B cell (primary cell): ENCODE measurements at regions of chr19 and their contacts with region 1.

Region 1: GRCh38 chr19:58408152-58409009 is at the start of gene ZNF584:
- DNase-seq: peak; percentile 96
- ATAC-seq: peak; percentile 96
- H3K4me3 ChIP-seq: peak within 1 kb of the TSS; percentile 58 to 93 (median 83)
- H3K4me3 Mint-ChIP-seq: peak within 1 kb of the TSS; percentile 97
- H3K27ac ChIP-seq: peak within 1 kb of the TSS; percentile 82 to 93
- H3K27ac Mint-ChIP-seq: peak within 1 kb of the TSS; percentile 98
- H3K4me1 ChIP-seq: peaks cover 11 to 20% of the 10 kb centered on the region in 2 donors
- H3K4me1 Mint-ChIP-seq: peaks cover 33% of the 10 kb centered on the region
- H3K27me3 ChIP-seq: no peaks in the 10 kb centered on the region
- H3K27me3 Mint-ChIP-seq: no peaks in the 10 kb centered on the region
- CTCF ChIP-seq: no peak
- total RNA-seq, gene ZNF584: 12.3 and 14.0 TPM in 2 replicates

Region 2: GRCh38 chr19:58182989-58183816 is 225.2 kb before region 1 on chr19 and contains the start of gene ZNF274:
- CTCF ChIA-PET with region 1: no interaction called
- POLR2A ChIA-PET with region 1: no interaction called
- intact Hi-C with region 1: loop called (anchors 2 kb)
- DNase-seq: peak; percentile 97
- ATAC-seq: peak; percentile 85
- H3K4me3 ChIP-seq: peak within 1 kb of the TSS; percentile 78 to 100 (median 88)
- H3K4me3 Mint-ChIP-seq: peak within 1 kb of the TSS; percentile 96
- H3K27ac ChIP-seq: peak within 1 kb of the TSS; percentile 99 to 100
- H3K27ac Mint-ChIP-seq: peak within 1 kb of the TSS; percentile 100
- H3K4me1 ChIP-seq: peaks cover 12 to 20% of the 10 kb centered on the region in 2 donors
- H3K4me1 Mint-ChIP-seq: peaks cover 26% of the 10 kb centered on the region
- H3K27me3 ChIP-seq: no peaks in the 10 kb centered on the region
- H3K27me3 Mint-ChIP-seq: no peaks in the 10 kb centered on the region
- CTCF ChIP-seq: no peak
- total RNA-seq, gene ZNF274: 83.7 and 85.4 TPM in 2 replicates

Region 3: GRCh38 chr19:58296104-58296503 is 112.3 kb before region 1 on chr19:
- CTCF ChIA-PET with region 1: no interaction called
- POLR2A ChIA-PET with region 1: no interaction called
- intact Hi-C with region 1: no loop called
- DNase-seq: no peak
- ATAC-seq: no peak
- H3K4me3 ChIP-seq: no peak overlapping the region
- H3K4me3 Mint-ChIP-seq: no peak overlapping the region
- H3K27ac ChIP-seq: no peak overlapping the region
- H3K27ac Mint-ChIP-seq: no peak overlapping the region
- H3K4me1 ChIP-seq: no peaks in the 10 kb centered on the region
- H3K4me1 Mint-ChIP-seq: no peaks in the 10 kb centered on the region
- H3K27me3 ChIP-seq: no peaks in the 10 kb centered on the region
- H3K27me3 Mint-ChIP-seq: no peaks in the 10 kb centered on the region
- CTCF ChIP-seq: no peak

Region 4: DNA sequence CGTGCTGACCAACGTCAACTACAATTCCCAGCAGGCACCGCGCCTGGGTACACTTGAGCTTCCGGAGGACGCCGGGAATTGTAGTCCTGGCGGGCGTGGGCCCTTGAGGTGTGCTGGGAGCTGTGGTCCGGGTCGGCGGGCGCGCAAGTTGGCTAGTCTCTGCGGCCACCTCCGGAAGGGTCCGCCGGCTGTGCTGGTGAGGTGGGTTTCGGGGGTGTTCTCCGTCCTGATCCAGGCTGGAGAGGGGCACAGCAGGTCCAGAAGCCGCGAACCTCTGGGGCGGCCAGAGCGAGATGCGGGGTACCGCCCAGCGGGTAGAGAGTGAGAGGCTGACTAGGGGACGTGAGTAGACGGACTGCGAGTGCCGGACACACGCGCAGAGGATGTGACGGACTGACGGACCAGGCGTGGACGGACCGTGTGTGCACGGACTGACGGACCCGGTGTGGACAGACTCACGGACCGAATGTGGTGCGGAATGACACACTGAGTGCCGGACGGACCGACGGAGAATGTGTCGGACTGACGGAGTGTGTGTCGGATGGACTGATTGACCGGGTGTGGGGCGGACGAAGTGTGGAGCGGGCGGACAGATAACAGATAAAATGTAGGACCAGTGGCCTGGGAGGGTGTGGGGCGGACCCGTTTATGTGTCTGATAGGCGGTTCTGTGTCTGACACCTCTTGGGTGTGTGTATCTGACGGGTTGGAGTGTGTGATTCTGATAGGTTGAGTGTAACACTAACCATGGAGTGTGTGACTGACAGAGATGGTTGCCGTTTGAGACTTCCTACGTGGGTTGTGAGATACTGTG is 81.3 kb before region 1 on chr19 and contains the start of gene ZSCAN22:
- CTCF ChIA-PET with region 1: no interaction called
- POLR2A ChIA-PET with region 1: no interaction called
- intact Hi-C with region 1: loop called (anchors 1 kb)
- DNase-seq: peak; percentile 90
- ATAC-seq: peak; percentile 92
- H3K4me3 ChIP-seq: peak within 1 kb of the TSS; percentile 72 to 98 (median 83)
- H3K4me3 Mint-ChIP-seq: no peak within 1 kb of the TSS
- H3K27ac ChIP-seq: peak within 1 kb of the TSS; percentile 71 to 82
- H3K27ac Mint-ChIP-seq: no peak within 1 kb of the TSS
- H3K4me1 ChIP-seq: peaks cover 11 to 23% of the 10 kb centered on the region in 2 donors
- H3K4me1 Mint-ChIP-seq: no peaks in the 10 kb centered on the region
- H3K27me3 ChIP-seq: no peaks in the 10 kb centered on the region
- H3K27me3 Mint-ChIP-seq: no peaks in the 10 kb centered on the region
- CTCF ChIP-seq: no peak
- total RNA-seq, gene ZSCAN22: 7.1 TPM in 2 replicates

Region 5: DNA sequence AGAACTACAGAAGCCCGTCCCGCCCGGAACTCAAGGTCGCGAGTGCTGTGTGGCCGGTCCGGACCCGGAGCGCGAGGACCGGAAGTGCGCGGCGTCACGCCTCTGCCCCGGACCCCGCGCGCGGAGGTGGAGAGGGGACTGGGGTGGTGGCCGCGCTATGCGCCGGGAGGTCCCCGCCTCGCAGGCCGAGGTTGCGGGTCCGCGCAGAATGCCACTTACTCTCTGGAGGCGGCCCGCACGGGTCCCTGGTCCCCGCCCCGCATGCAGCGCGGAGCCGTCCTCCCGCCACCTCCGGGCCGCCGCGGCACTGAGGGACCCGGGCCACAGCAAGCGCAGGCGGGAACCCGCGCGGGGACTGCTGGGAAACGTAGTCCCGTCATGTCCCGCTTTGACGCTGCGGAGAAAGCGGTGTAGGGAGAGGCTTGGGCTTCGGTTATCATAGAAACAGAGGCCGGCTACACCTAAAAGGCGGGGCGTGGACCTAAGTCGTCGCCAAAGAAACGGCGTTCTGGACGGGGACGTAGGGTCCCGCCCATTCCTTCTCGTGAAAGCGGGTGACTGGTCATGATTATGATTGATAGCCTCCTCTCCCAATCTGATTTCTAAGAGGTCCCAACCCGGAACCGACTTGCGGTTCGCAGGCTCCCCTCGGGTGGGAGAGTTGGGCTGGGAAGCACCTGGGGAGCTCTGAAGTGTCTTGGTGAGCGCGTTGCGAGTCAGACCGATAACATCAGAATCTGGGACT is 27.5 kb before region 1 on chr19 and contains the start of gene ZNF837:
- CTCF ChIA-PET with region 1: interaction called, 3 read pairs
- POLR2A ChIA-PET with region 1: interaction called, 4 read pairs
- intact Hi-C with region 1: loop called (anchors 1 kb)
- DNase-seq: peak; percentile 100
- ATAC-seq: peak; percentile 86
- H3K4me3 ChIP-seq: peak within 1 kb of the TSS; percentile 22 to 78 (median 71)
- H3K4me3 Mint-ChIP-seq: peak within 1 kb of the TSS; percentile 92
- H3K27ac ChIP-seq: peak within 1 kb of the TSS; percentile 89 to 97
- H3K27ac Mint-ChIP-seq: peak within 1 kb of the TSS; percentile 95
- H3K4me1 ChIP-seq: peaks cover 27 to 35% of the 10 kb centered on the region in 2 donors
- H3K4me1 Mint-ChIP-seq: peaks cover 32% of the 10 kb centered on the region
- H3K27me3 ChIP-seq: no peaks in the 10 kb centered on the region
- H3K27me3 Mint-ChIP-seq: no peaks in the 10 kb centered on the region
- CTCF ChIP-seq: no peak
- total RNA-seq, gene ZNF837: 3.1 and 4.2 TPM in 2 replicates

Region 6: DNA sequence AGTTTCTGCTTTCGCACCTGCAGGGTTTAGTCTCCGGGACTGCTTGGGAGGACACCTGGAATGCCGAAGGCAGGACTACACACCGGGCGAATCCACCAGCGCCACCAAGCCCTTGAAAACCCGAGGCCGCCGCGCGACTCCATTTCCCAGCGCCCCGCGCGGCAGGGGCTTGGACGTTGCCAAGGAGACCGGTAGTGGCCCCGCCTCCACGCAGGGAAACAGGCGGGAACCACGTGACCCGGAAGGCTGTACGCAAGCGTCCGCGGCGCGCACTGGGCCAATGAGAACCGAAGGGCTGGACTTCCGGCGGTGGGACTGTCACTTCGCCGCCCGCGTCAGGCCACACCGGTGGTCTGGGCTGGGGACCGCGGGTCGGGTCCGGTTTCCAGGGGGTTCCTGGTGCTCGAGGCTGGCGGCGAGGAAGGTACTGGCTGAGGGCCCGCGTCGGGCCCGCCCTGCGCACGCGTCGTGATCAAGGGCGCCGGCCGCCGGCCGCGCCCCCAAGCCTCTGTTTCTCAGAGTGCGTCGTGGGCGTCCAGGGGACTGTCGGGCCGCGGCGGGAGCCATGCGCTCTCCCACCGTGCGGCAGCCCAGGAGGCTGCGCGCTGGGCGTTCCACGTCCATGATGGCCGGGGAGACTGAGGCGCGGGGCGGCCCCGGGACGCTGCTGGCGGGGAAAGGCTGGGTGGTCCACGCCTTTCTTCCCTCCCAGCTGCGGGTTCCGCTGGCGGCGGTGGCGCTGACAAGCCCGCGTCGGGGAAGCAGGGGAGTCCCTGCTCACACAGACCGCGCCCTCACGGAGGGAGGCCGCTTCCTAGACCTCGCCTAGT is 58.6 kb after region 1 on chr19 and contains the start of gene ZNF324:
- CTCF ChIA-PET with region 1: no interaction called
- POLR2A ChIA-PET with region 1: no interaction called
- intact Hi-C with region 1: loop called (anchors 1 kb)
- DNase-seq: peak; percentile 97
- ATAC-seq: peak; percentile 96
- H3K4me3 ChIP-seq: peak within 1 kb of the TSS; percentile 34 to 91 (median 89)
- H3K4me3 Mint-ChIP-seq: peak within 1 kb of the TSS; percentile 85
- H3K27ac ChIP-seq: peak within 1 kb of the TSS; percentile 18 to 90
- H3K27ac Mint-ChIP-seq: peak within 1 kb of the TSS; percentile 85
- H3K4me1 ChIP-seq: peaks cover 8 to 25% of the 10 kb centered on the region in 2 donors
- H3K4me1 Mint-ChIP-seq: peaks cover 26% of the 10 kb centered on the region
- H3K27me3 ChIP-seq: no peaks in the 10 kb centered on the region
- H3K27me3 Mint-ChIP-seq: no peaks in the 10 kb centered on the region
- CTCF ChIP-seq: no peak
- total RNA-seq, gene ZNF324: 17.6 and 21.0 TPM in 2 replicates